Mammary epithelial cell (primary cell): ENCODE measurements at regions of chr1 and their contacts with region 1.

Region 1: DNA sequence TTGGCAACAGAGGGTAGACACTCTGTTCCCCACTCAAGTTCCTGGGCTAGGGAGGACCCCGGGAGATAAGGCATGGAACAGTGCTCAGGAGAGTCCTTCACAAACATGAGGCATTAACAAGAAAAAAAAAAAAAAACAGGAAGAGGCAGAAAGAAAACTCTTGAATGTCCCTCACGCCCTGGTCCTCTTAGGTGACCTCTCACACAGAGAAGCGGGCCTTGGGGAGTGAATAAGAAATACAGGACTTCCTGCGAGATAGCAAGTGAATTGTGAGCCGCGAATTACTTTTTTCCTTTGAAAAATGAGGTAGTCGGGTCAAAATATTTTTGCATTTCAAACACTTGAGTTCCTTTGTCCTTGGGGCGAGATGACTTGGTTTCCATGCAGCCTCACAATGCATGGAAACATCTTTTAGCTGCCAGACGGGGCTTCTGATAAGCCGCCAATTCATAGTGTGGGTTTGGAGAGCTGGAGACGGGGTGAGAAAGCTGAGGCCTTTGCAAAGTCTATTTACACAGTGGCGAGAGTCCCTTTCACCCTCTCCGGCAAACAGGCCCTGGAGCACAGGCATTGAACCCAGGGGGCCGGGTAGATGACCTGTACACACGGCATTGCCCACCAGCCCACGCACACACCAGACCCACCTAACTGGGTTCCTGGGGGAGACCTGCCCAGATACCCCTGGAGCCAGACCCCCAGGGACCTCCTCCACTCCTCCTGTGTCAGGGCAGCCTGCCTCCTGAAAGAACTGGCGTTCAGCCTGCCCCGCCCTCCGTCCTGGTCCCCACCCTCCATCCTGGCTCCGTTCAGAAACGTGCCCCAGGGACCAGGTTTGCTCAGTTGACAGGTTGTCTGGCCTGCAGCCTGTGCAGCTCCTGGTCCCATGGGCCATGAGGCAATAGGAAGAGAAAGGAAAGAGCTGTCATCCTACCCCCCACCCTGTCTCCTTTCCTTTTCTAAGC is 192.3 kb downstream of the PRDM16 start:
- DNase-seq: no peak
- H3K4me3 ChIP-seq: no peak overlapping the region
- H3K27ac ChIP-seq: no peak overlapping the region
- H3K4me1 ChIP-seq: no peaks in the 10 kb centered on the region
- H3K27me3 ChIP-seq: no peaks in the 10 kb centered on the region
- CTCF ChIP-seq: no peak

Region 2: GRCh38 chr1:3017440-3018050 is 243.7 kb before region 1 on chr1:
- CTCF ChIA-PET with region 1: no interaction called
- dilution Hi-C with region 1: no loop called
- in situ Hi-C with region 1: no loop called
- intact Hi-C with region 1: no loop called
- DNase-seq: no peak
- H3K4me3 ChIP-seq: no peak overlapping the region
- H3K27ac ChIP-seq: no peak overlapping the region
- H3K4me1 ChIP-seq: no peaks in the 10 kb centered on the region
- H3K27me3 ChIP-seq: no peaks in the 10 kb centered on the region
- CTCF ChIP-seq: no peak

Region 3: DNA sequence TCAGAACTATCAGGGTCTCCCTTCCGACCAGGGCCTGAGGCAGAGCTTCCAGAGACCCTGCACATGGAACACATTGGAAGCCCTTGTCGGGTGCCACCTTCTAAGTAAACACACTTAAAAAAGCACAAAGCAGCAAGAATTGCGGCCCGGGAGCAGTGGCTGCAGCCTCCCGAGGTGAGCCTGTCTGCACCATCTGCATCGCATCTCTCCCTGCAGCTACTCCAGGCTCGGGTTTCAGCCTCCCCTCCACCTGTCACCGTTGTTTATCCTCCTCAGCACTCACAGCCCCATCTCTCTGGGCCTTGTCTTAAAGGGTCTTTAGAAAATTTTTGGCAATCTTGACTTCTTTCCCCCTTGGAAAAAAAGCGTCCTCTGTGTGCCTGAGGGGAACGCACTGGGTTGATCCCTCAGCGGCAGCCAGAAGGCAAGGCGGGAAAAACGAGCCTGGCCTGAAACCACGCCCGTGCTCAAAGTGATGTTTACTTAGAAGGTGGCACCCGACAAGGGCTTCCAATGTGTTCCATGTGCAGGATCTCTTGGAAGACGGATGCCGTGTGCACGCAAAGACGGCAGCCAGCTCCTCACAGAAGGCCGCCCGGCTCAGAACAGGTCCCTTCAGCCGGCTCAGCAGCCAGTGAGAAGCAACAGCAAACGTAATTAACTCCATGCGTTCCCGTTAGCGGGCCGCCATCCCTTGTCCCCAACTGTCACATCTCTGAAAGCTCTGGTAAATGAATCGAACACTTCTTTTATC is 98.2 kb after region 1 on chr1:
- CTCF ChIA-PET with region 1: no interaction called
- dilution Hi-C with region 1: loop called (anchors 5 kb)
- in situ Hi-C with region 1: no loop called
- intact Hi-C with region 1: no loop called
- DNase-seq: no peak
- H3K4me3 ChIP-seq: no peak overlapping the region
- H3K27ac ChIP-seq: no peak overlapping the region
- H3K4me1 ChIP-seq: no peaks in the 10 kb centered on the region
- H3K27me3 ChIP-seq: no peaks in the 10 kb centered on the region
- CTCF ChIP-seq: no peak